A549 (cell line): ENCODE measurements at regions of chr2 and their contacts with region 1.

Region 1: GRCh38 chr2:27798948-27799645 is 27.6 kb downstream of the MRPL33 start:
- DNase-seq: peak; percentile 94 to 99
- ATAC-seq: peak; percentile 95 to 96
- H3K4me3 ChIP-seq: no peak overlapping the region
- H3K27ac ChIP-seq: peak overlapping the region; percentile 89 to 97
- H3K4me1 ChIP-seq: peaks cover 56% of the 10 kb centered on the region
- CTCF ChIP-seq: no peak
- EP300 ChIP-seq: peak; percentile 97 to 99
- POLR2A ChIP-seq: no peak
- RAD21 ChIP-seq: peak; percentile 49 to 61; a peak in 4 of 5 replicates

Region 2: GRCh38 chr2:27754138-27754588 is 44.9 kb before region 1 on chr2:
- CTCF ChIA-PET with region 1: interaction called, 18 read pairs
- POLR2A ChIA-PET with region 1: no interaction called
- DNase-seq: peak; percentile 53 to 85
- ATAC-seq: peak; percentile 97 to 99
- H3K4me3 ChIP-seq: no peak overlapping the region
- H3K27ac ChIP-seq: peak overlapping the region; percentile 74 to 82
- H3K4me1 ChIP-seq: peaks cover 26% of the 10 kb centered on the region
- CTCF ChIP-seq: peak; percentile 96
- EP300 ChIP-seq: no peak
- POLR2A ChIP-seq: no peak
- RAD21 ChIP-seq: peak; percentile 98 to 100

Region 3: DNA sequence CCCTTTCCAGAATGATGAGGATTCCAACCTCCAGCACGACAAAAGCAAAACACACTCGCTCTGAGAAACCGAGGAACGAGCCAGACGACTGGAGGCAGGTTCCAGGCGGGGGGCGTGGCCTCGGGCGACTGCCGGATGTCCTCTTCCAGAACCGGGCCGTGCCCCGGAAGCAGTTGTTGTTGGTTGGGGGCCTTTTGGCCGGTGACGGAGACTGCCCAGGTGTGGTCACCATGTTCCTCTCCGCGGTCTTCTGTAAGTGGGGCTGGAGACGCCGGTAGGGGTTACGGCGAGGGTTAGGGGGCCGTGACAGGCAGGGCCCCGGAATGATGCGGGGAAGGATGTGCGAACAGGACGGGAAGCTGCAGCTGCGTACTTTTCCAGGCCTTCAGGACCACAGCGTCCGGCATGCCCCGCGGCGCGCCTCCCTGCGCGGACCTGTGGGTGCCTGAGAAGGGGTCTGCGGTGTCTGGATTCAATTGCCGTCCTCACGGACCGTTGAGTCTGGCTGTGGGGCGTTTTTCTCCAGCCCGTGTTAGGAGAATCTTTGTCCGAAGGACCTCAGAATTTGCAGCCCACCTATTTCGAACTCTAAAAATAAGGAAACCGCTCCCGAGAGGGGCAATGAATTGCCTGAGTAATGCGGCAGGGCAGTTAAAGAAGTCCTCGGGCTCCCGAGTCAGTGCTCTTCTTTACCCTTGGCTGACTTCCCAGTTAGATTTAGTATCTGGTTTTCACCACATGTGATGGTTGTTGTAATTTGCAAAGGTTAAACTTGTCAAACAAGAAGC is 27.4 kb before region 1 on chr2 and contains the start of gene MRPL33:
- CTCF ChIA-PET with region 1: interaction called, 10 read pairs
- POLR2A ChIA-PET with region 1: interaction called, 5 read pairs
- DNase-seq: peak; percentile 95 to 99
- ATAC-seq: peak; percentile 98 to 99
- H3K4me3 ChIP-seq: peak within 1 kb of the TSS; percentile 92
- H3K27ac ChIP-seq: peak within 1 kb of the TSS; percentile 93 to 94
- H3K4me1 ChIP-seq: peaks cover 34% of the 10 kb centered on the region
- CTCF ChIP-seq: no peak
- EP300 ChIP-seq: no peak
- POLR2A ChIP-seq: peak; percentile 74
- RAD21 ChIP-seq: 0 out of 5 replicates have a peak, but pooled peaks of 1 of the 2 experiments have one; percentile 3
- polyA plus RNA-seq, gene MRPL33: 171 and 287 TPM in 2 replicates

Region 4: GRCh38 chr2:27890146-27890923 is 91.2 kb after region 1 on chr2 and contains the starts of genes BABAM2 and RBKS:
- CTCF ChIA-PET with region 1: interaction called, 3 read pairs
- POLR2A ChIA-PET with region 1: interaction called, 15 read pairs
- DNase-seq: peak; percentile 88 to 91
- ATAC-seq: peak; percentile 92 to 93
- H3K4me3 ChIP-seq: peak within 1 kb of the TSS; percentile 85
- H3K27ac ChIP-seq: peak within 1 kb of the TSS; percentile 94 to 97
- H3K4me1 ChIP-seq: peaks cover 60% of the 10 kb centered on the region
- CTCF ChIP-seq: no peak
- EP300 ChIP-seq: peak in 1 of 2 experiments; percentile 8; a peak in 1 of 5 replicates
- POLR2A ChIP-seq: peak; percentile 84
- RAD21 ChIP-seq: peak in 1 of 2 experiments; percentile 31; a peak in 2 of 5 replicates
- polyA plus RNA-seq, gene BABAM2: 78.4 and 87.1 TPM in 2 replicates
- polyA plus RNA-seq, gene RBKS: 7.4 and 8.5 TPM in 2 replicates

Region 5: DNA sequence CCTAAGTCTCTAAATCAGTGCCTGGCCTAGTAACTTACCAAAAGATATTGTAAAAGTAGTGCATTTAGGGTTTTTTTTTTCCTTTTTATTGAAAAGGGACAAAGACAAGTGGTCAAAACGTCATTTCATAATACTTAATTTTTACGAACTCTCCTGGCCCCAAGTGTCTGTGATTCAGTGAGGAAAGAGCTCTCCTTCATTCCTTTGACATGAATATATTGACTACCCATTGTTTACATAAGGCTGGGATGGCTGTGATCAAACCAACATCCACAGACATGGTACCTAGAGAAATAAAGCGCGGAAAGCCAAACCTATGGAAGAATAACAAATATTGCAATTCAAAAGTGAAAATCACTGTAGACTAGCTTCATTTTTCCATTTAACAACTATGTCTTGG is 289.9 kb after region 1 on chr2:
- CTCF ChIA-PET with region 1: no interaction called
- POLR2A ChIA-PET with region 1: no interaction called
- DNase-seq: peak; percentile 27 to 33
- ATAC-seq: peak; percentile 57 to 79; a peak in 3 of 6 replicates
- H3K4me3 ChIP-seq: no peak overlapping the region
- H3K27ac ChIP-seq: peak overlapping the region; percentile 67 to 82
- H3K4me1 ChIP-seq: peaks cover 55% of the 10 kb centered on the region
- CTCF ChIP-seq: no peak
- EP300 ChIP-seq: peak in 1 of 2 experiments; percentile 52; a peak in 1 of 5 replicates
- POLR2A ChIP-seq: no peak
- RAD21 ChIP-seq: no peak; a peak in 1 of 5 replicates